ENCODE measurements at regions of chr6 and their contacts with region 1.

Region 1: DNA sequence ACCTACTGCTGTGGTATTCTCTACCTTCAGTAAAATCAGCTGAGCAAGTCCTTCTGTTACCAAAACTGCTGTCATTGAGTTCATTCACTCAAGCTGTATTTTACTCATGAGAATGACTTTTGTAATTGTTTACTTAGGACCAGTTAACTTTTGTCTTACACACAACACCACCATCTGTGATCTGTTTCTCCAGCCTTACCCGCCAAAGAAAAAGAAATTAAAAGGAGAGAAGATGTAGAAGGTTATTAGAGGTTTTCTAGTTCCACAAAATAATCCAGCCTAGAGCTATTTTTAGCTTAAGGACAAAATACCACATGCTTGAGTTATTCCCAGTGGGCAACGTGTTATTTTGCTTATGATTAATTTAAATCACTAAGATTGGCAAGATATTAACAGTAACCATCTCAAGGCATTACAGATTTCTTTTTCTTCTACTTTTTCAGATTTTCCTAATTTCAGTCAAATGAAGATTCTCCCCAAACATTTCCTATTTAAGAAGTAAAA is 38.2 kb downstream of the FAM8A1 start:
- DNase-seq: no peak
- ATAC-seq: no peak
- H3K4me3 Mint-ChIP-seq: no peak overlapping the region
- H3K27ac Mint-ChIP-seq: peak overlapping the region; percentile 9
- H3K4me1 Mint-ChIP-seq: peaks cover 41% of the 10 kb centered on the region
- H3K27me3 Mint-ChIP-seq: no peaks in the 10 kb centered on the region

Region 2: GRCh38 chr6:17584241-17584803 is 53.9 kb before region 1 on chr6:
- CTCF ChIA-PET with region 1: no interaction called
- POLR2A ChIA-PET with region 1: no interaction called
- intact Hi-C with region 1: no loop called
- DNase-seq: no peak
- ATAC-seq: peak; percentile 56
- H3K4me3 Mint-ChIP-seq: no peak overlapping the region
- H3K27ac Mint-ChIP-seq: no peak overlapping the region
- H3K4me1 Mint-ChIP-seq: peaks cover 12% of the 10 kb centered on the region
- H3K27me3 Mint-ChIP-seq: peaks cover 5% of the 10 kb centered on the region

Region 3: DNA sequence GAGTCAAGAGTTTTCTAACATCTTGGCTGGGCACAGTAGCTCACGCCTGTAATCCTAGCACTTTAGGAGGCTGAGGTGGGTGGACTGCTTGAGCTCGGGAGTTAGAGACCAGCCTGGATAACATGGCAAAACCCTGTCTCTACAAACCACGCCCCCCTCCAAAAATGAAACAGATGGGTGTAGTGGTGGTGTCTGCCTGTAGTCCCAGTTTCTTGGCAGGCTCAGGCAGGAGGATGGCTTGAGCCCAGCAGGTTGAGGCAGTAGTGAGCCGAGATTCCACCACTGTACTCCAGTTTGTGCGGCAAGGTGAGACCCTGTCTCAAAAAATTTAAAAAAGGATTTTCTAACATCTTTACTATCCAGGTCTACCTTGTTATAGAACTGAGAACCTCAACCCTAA is 16.1 kb before region 1 on chr6:
- CTCF ChIA-PET with region 1: no interaction called
- POLR2A ChIA-PET with region 1: no interaction called
- intact Hi-C with region 1: loop called in 1 of 2 experiments (anchors 2 kb)
- DNase-seq: no peak
- ATAC-seq: no peak
- H3K4me3 Mint-ChIP-seq: no peak overlapping the region
- H3K27ac Mint-ChIP-seq: no peak overlapping the region
- H3K4me1 Mint-ChIP-seq: peaks cover 10% of the 10 kb centered on the region
- H3K27me3 Mint-ChIP-seq: no peaks in the 10 kb centered on the region

Region 4: GRCh38 chr6:17665132-17665531 is 26.9 kb after region 1 on chr6:
- CTCF ChIA-PET with region 1: no interaction called
- POLR2A ChIA-PET with region 1: no interaction called
- intact Hi-C with region 1: loop called (anchors 2 to 5 kb)
- DNase-seq: no peak
- ATAC-seq: no peak
- H3K4me3 Mint-ChIP-seq: no peak overlapping the region
- H3K27ac Mint-ChIP-seq: no peak overlapping the region
- H3K4me1 Mint-ChIP-seq: peaks cover 19% of the 10 kb centered on the region
- H3K27me3 Mint-ChIP-seq: no peaks in the 10 kb centered on the region

Region 5: GRCh38 chr6:17673543-17674254 is 35.4 kb after region 1 on chr6:
- CTCF ChIA-PET with region 1: no interaction called
- POLR2A ChIA-PET with region 1: no interaction called
- intact Hi-C with region 1: loop called in 1 of 2 experiments (anchors 5 kb)
- DNase-seq: peak; percentile 30
- ATAC-seq: peak; percentile 89
- H3K4me3 Mint-ChIP-seq: no peak overlapping the region
- H3K27ac Mint-ChIP-seq: peak overlapping the region; percentile 63
- H3K4me1 Mint-ChIP-seq: peaks cover 32% of the 10 kb centered on the region
- H3K27me3 Mint-ChIP-seq: no peaks in the 10 kb centered on the region

Measured in activated CD4-positive, alpha-beta T cell treated with anti-CD3 and anti-CD28 coated beads for 36 hours (primary cell).